ENCODE measurements at regions of chr4 and their contacts with region 1.

Region 1: DNA sequence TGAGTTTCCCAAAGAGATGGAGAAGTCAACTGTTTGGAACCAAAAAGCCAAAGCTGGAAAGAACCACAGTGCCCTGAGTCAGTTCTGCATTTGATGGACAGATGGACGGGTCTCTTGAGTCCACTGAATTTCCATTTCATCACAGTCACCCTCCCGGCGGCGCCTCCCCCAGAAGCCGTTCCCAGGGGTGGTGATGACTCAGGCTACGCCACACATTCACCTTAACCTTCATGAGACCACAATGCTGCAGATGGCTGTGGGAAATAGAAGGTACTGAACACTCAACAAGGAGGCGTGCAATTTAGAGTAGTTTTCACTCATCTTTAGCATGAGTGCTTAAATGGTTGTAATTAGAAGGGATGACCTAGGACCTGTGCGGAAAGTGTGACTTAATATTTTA is 61.3 kb downstream of the STOX2 start:
- DNase-seq: no peak
- ATAC-seq: no peak
- H3K4me3 ChIP-seq: no peak overlapping the region
- H3K27ac ChIP-seq: no peak overlapping the region
- H3K4me1 ChIP-seq: peaks cover under 1 to 22% (median 7%) of the 10 kb centered on the region in 9 donors
- H3K27me3 ChIP-seq: no peaks in the 10 kb centered on the region
- CTCF ChIP-seq: no peak

Region 2: GRCh38 chr4:184022679-184023383 is 56.5 kb after region 1 on chr4:
- intact Hi-C with region 1: loop called in 1 of 10 experiments (anchors 2 kb)
- DNase-seq: no peak
- ATAC-seq: no peak
- H3K4me3 ChIP-seq: no peak overlapping the region
- H3K27ac ChIP-seq: no peak overlapping the region
- H3K4me1 ChIP-seq: peaks cover 0 to 26% (median 7%) of the 10 kb centered on the region in 9 donors
- H3K27me3 ChIP-seq: no peaks in the 10 kb centered on the region
- CTCF ChIP-seq: no peak

Measured in heart right ventricle (tissue), 16 donors.